BJ (cell line): ENCODE measurements at regions of chr2 and their contacts with region 1.

Region 1: DNA sequence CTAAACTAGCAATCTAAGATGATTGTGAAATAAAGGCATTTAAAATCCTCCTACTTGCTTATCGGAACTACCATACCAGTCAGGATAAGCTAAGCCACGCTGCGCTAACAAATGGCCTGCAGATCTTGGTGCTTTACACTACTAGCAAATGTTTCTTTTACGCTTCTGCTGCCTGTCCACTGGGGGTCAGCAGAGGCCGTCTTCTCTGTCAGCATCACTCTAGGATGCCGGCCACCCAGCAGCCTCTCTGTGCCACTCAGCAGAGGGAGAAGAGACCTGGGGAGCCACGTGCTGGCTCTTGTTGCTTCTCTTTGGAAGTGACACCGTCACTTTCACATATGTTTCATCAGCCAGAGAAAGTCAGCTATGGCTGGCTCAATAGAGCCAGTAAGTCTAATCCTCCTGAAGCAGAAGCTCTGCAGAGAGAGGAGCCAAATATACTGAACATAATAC is 36.6 kb downstream of the COPS8 start:
- DNase-seq: no peak
- H3K4me3 ChIP-seq: no peak overlapping the region
- H3K27me3 ChIP-seq: no peaks in the 10 kb centered on the region
- CTCF ChIP-seq: peak; percentile 84

Region 2: DNA sequence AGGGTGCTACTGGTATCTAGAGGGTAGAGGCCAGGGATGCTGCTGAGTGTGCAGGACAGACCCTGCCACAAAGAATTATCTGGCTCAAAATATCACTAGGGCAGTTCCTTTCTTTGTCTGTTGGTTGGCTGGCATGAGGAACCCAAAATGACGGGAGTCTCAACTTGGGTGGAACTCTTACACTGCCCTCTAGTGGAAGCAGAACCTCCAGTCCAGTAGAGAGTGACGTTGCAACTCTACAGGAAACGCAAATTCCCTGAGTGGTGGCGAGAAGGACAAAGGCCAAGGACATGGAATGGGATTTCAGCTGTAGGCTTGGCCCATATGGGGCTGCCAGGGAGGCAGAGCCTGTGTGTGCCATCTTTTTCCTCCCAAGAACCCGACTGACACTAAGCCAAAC is 10.6 kb after region 1 on chr2:
- CTCF ChIA-PET with region 1: interaction called, 12 read pairs
- POLR2A ChIA-PET with region 1: no interaction called
- DNase-seq: no peak
- H3K4me3 ChIP-seq: no peak overlapping the region
- H3K27me3 ChIP-seq: no peaks in the 10 kb centered on the region
- CTCF ChIP-seq: peak; percentile 15; the same call in 1 of the 2 replicates

Region 3: DNA sequence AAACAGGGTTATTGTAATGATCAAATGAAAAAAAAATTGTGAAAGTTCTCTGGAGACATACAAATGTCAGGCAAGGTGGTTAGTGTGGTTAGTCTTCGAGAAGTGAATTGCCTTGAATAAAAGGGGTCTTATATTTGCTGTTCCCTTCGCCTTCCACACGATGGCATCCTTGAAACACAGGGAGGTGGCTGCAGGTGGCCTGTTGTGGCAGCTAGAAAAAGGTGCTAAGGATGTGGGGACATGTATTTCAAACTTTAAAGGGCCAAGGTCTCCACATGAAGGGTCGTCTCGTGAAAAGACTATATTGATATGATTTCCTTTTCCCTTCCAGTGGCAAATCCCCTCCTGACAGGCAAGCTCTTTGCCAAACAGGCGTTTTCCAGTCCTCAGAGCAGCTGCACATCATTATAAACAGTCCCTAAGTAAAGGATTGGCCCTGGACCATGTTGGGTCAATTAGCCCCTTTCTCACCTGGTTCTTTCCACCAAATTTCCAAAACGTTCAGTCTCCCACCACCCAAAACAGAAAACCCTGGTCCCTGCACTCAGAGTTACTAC is 31.9 kb after region 1 on chr2:
- CTCF ChIA-PET with region 1: interaction called, 15 read pairs
- POLR2A ChIA-PET with region 1: no interaction called
- DNase-seq: no peak
- H3K4me3 ChIP-seq: no peak overlapping the region
- H3K27me3 ChIP-seq: no peaks in the 10 kb centered on the region
- CTCF ChIP-seq: peak; percentile 79